ENCODE measurements at regions of chr6 and their contacts with region 1.

Region 1: DNA sequence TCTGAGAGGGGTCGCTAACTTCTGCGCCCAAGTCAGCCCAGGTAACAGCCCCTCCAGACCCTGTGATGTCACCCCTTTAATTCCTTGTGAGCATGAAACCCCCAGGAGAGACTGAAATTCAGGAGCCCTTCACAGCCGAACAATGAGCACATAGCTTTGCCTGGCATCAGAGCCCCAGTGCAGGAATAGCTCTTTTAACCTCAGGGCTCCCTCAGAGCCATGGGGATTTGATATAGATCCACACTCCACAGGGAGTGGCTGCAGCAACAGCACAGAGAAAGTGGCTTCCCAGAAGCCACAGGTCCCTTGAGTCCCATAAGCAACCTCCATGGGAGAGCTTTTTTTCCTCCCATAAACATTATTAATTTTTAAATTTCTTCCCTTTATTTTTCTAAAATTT is 150.0 kb upstream of the MARCKS start:
- DNase-seq: no peak
- ATAC-seq: no peak
- H3K4me3 ChIP-seq: no peak overlapping the region
- H3K27ac ChIP-seq: no peak overlapping the region
- H3K4me1 ChIP-seq: no peaks in the 10 kb centered on the region
- H3K27me3 ChIP-seq: no peaks in the 10 kb centered on the region
- CTCF ChIP-seq: no peak

Region 2: GRCh38 chr6:113630738-113631535 is 76.3 kb before region 1 on chr6:
- CTCF ChIA-PET with region 1: interaction called, 10 read pairs
- POLR2A ChIA-PET with region 1: no interaction called
- in situ Hi-C with region 1: no loop called
- intact Hi-C with region 1: no loop called
- DNase-seq: no peak
- ATAC-seq: peak; percentile 62
- H3K4me3 ChIP-seq: no peak overlapping the region
- H3K27ac ChIP-seq: 0 out of 2 replicates have a peak overlapping the region, but pooled peaks have one; percentile 4
- H3K4me1 ChIP-seq: no peaks in the 10 kb centered on the region; the same call in 1 of the 2 replicates
- H3K27me3 ChIP-seq: no peaks in the 10 kb centered on the region
- CTCF ChIP-seq: no peak

Region 3: DNA sequence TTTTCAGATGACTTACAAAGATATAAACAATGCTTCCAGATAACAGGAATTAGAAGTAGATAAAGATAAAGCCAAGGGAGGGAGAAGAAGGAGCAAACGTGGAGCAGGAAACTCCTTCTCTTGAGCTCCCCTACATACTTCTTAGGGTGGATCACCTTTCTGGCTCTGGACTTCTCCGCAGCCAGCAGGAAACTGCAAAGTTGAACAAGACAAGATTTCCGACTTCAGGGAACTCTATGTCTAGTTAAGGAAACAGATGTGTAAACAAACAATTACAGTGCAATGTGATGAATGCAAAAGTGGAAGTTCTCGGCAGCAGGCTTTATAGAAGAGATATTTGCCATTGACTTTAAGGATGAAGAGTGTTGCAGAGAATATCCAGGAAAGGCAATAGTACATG is 16.0 kb after region 1 on chr6:
- CTCF ChIA-PET with region 1: no interaction called
- POLR2A ChIA-PET with region 1: no interaction called
- in situ Hi-C with region 1: no loop called
- intact Hi-C with region 1: no loop called
- DNase-seq: no peak
- ATAC-seq: no peak
- H3K4me3 ChIP-seq: no peak overlapping the region
- H3K27ac ChIP-seq: no peak overlapping the region
- H3K4me1 ChIP-seq: no peaks in the 10 kb centered on the region
- H3K27me3 ChIP-seq: no peaks in the 10 kb centered on the region
- CTCF ChIP-seq: no peak

Measured in Panc1 (cell line).